ENCODE measurements at regions of chr19 and their contacts with region 1.

Region 1: DNA sequence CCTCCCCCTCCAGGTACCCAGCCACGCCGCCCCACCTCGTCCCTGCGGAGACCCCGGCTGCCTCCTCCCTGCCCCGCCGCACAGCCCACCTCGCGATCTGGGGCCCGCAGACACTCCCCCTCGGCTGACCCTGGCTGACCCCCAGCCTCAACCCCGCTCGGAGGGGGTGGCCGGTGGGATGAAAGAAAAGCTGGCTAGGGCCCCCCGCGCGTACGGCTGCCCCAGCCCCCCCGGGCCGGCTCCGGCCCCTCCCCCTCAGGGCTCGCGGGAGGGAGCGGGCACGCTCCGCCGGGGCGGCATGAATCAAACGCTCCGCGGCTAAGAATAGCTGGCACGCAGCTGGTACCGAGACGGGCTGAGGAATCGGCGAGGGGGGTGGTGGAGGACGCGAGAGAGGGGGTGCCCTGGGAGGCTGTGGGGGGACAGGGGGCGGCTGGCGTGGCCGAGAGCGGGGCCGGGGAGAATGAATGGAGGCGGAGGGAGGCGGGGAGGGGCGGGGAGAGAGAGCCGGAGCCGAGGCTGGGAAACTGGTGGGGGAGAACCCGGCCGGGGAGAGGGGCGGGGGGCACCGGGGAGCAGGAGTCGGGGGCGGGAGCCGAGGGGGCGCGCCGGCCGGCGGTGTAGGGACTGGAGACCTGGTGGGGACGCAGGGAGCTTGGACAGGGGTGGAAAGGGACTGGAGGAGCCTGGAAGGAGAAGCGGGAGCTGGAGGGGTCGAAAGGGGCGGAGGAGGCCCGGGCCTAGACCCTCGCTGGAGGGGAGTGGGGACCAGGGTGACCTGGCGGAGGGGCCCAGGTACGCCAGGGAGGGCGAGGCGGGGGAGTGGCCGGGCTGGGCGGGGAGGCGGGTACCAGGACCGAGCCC is 1.1 kb downstream of the SHANK1 start:
- DNase-seq: no peak
- H3K4me3 ChIP-seq: no peak overlapping the region
- H3K27ac ChIP-seq: no peak overlapping the region
- H3K4me1 ChIP-seq: no peaks in the 10 kb centered on the region
- H3K27me3 ChIP-seq: peaks cover 64% of the 10 kb centered on the region
- CTCF ChIP-seq: no peak

Region 2: DNA sequence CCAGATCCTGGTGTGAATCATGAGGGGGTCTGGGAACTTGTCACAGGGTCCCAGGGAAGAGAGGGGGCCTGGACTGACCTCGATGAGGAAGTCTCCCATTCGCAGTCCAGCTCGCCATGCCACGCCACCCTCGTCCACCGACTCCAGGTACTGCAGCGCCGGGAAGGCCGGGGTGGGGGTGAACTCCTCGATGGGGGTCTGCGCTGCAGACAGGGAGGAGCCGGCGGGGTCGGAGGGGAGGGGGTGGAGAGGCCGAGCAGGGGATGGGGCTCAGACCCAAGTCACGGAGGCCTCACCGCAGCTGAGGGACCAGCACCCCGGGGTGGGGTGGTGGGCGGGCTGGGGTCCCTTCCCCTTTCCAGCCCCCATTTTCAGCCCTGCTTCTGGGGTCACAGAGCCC is 29.7 kb before region 1 on chr19:
- CTCF ChIA-PET with region 1: no interaction called
- POLR2A ChIA-PET with region 1: interaction called, 20 read pairs
- intact Hi-C with region 1: no loop called
- DNase-seq: no peak
- H3K4me3 ChIP-seq: no peak overlapping the region
- H3K27ac ChIP-seq: no peak overlapping the region
- H3K4me1 ChIP-seq: no peaks in the 10 kb centered on the region
- H3K27me3 ChIP-seq: peaks cover 83% of the 10 kb centered on the region
- CTCF ChIP-seq: no peak